ENCODE measurements at regions of chr19 and their contacts with region 1.

Region 1: GRCh38 chr19:32691291-32691951 is at the start of gene NUDT19:
- DNase-seq: peak; percentile 62
- ATAC-seq: peak; percentile 92
- H3K4me3 ChIP-seq: peak within 1 kb of the TSS; percentile 79
- H3K27ac ChIP-seq: peak within 1 kb of the TSS; percentile 69
- H3K4me1 ChIP-seq: peaks cover 6% of the 10 kb centered on the region; the same call in 1 of the 2 replicates
- H3K27me3 ChIP-seq: no peaks in the 10 kb centered on the region
- CTCF ChIP-seq: no peak
- EP300 ChIP-seq: no peak
- POLR2A ChIP-seq: peak; percentile 84
- RAD21 ChIP-seq: no peak
- polyA plus RNA-seq, gene NUDT19: 16.8 to 31.0 TPM

Region 2: DNA sequence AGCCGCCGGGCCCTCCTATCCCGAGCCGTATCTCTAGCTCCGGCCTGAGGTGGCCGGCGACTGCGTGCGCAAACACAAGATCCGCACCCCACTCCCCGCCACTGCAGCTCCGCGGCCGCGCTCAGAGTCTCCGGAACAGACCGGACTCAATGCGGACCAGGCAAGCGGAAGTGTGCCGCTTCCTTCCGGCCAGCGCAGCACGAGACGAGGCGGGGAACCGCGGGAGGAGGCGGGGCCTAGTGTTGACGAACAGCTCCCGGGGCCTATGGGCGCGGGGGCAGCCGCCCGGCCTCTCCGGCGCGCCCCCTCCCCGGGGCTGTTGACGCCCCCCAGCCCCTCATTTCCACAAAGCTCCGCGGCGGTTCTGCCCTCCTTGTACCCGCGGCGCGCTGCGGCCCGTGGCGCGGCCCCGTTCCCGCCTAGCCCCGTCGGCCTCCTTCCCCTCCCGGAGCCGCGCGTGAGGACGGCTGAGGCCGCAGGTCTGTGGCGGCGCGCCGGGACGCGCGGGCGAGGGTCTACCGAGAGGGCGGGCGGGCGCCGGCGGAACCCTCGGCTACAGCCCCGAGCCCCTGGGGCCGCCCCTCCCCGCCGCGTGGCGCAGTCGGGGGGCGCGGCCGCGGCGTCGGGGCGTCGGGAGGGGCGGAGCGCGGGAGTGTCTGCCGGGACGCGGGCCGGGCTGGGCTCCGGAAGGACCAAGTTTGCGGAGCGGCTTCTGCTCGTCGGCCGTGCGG is 285.8 kb before region 1 on chr19 and contains the start of gene DPY19L3:
- CTCF ChIA-PET with region 1: no interaction called
- POLR2A ChIA-PET with region 1: no interaction called
- RAD21 ChIA-PET with region 1: no interaction called
- SMC1A ChIA-PET with region 1: no interaction called
- in situ Hi-C with region 1: no loop called
- intact Hi-C with region 1: loop called (anchors 5 kb)
- DNase-seq: peak; percentile 59
- ATAC-seq: peak; percentile 97
- H3K4me3 ChIP-seq: peak within 1 kb of the TSS; percentile 97
- H3K27ac ChIP-seq: peak within 1 kb of the TSS; percentile 97
- H3K4me1 ChIP-seq: peaks cover 12% of the 10 kb centered on the region
- H3K27me3 ChIP-seq: no peaks in the 10 kb centered on the region
- CTCF ChIP-seq: no peak
- EP300 ChIP-seq: no peak
- POLR2A ChIP-seq: peak; percentile 99
- RAD21 ChIP-seq: no peak
- polyA plus RNA-seq, gene DPY19L3: 2.5 to 3.2 TPM

Region 3: GRCh38 chr19:32427536-32427935 is 263.9 kb before region 1 on chr19:
- CTCF ChIA-PET with region 1: no interaction called
- POLR2A ChIA-PET with region 1: no interaction called
- RAD21 ChIA-PET with region 1: no interaction called
- SMC1A ChIA-PET with region 1: no interaction called
- in situ Hi-C with region 1: no loop called
- intact Hi-C with region 1: no loop called
- DNase-seq: no peak
- ATAC-seq: no peak
- H3K4me3 ChIP-seq: no peak overlapping the region
- H3K27ac ChIP-seq: no peak overlapping the region
- H3K4me1 ChIP-seq: no peaks in the 10 kb centered on the region
- H3K27me3 ChIP-seq: no peaks in the 10 kb centered on the region
- CTCF ChIP-seq: no peak
- EP300 ChIP-seq: no peak
- POLR2A ChIP-seq: no peak
- RAD21 ChIP-seq: no peak

Region 4: GRCh38 chr19:32719611-32720059 is 28.2 kb after region 1 on chr19 and contains the start of gene TDRD12:
- CTCF ChIA-PET with region 1: no interaction called
- POLR2A ChIA-PET with region 1: no interaction called
- RAD21 ChIA-PET with region 1: no interaction called
- SMC1A ChIA-PET with region 1: no interaction called
- in situ Hi-C with region 1: no loop called
- intact Hi-C with region 1: no loop called
- DNase-seq: no peak
- ATAC-seq: no peak
- H3K4me3 ChIP-seq: no peak within 1 kb of the TSS
- H3K27ac ChIP-seq: no peak within 1 kb of the TSS
- H3K4me1 ChIP-seq: no peaks in the 10 kb centered on the region
- H3K27me3 ChIP-seq: no peaks in the 10 kb centered on the region
- CTCF ChIP-seq: no peak
- EP300 ChIP-seq: no peak
- POLR2A ChIP-seq: no peak
- RAD21 ChIP-seq: no peak
- polyA plus RNA-seq, gene TDRD12: not detected

Region 5: GRCh38 chr19:32971715-32972540 is 280.5 kb after region 1 on chr19 and contains the starts of genes CEP89 and FAAP24:
- CTCF ChIA-PET with region 1: interaction called, 5 read pairs
- POLR2A ChIA-PET with region 1: no interaction called
- RAD21 ChIA-PET with region 1: no interaction called
- SMC1A ChIA-PET with region 1: no interaction called
- in situ Hi-C with region 1: no loop called
- intact Hi-C with region 1: loop called (anchors 5 kb)
- DNase-seq: peak; percentile 100
- ATAC-seq: peak; percentile 100
- H3K4me3 ChIP-seq: peak within 1 kb of the TSS; percentile 95
- H3K27ac ChIP-seq: peak within 1 kb of the TSS; percentile 82
- H3K4me1 ChIP-seq: 0 out of 2 replicates have a peak, but pooled peaks cover 3% of the 10 kb centered on the region
- H3K27me3 ChIP-seq: no peaks in the 10 kb centered on the region
- CTCF ChIP-seq: no peak
- EP300 ChIP-seq: no peak
- POLR2A ChIP-seq: peak; percentile 94
- RAD21 ChIP-seq: no peak
- polyA plus RNA-seq, gene CEP89: 7.9 to 8.7 TPM
- polyA plus RNA-seq, gene FAAP24: 15.8 to 17.4 TPM

Measured in GM12878 (cell line).